B cell (primary cell): ENCODE measurements at regions of chr9 and their contacts with region 1.

Region 1: GRCh38 chr9:37283730-37284325 is 138.7 kb upstream of the GRHPR start:
- DNase-seq: peak; percentile 54
- ATAC-seq: peak; percentile 57
- H3K4me3 ChIP-seq: peak overlapping the region in 4 of 5 experiments; percentile 13 to 40 (median 31)
- H3K4me3 Mint-ChIP-seq: peak overlapping the region; percentile 75
- H3K27ac ChIP-seq: peak overlapping the region; percentile 54 to 78
- H3K27ac Mint-ChIP-seq: peak overlapping the region; percentile 90
- H3K4me1 ChIP-seq: peaks cover 40 to 61% of the 10 kb centered on the region in 2 donors
- H3K4me1 Mint-ChIP-seq: peaks cover 60% of the 10 kb centered on the region
- H3K27me3 ChIP-seq: no peaks in the 10 kb centered on the region
- H3K27me3 Mint-ChIP-seq: no peaks in the 10 kb centered on the region
- CTCF ChIP-seq: no peak

Region 2: DNA sequence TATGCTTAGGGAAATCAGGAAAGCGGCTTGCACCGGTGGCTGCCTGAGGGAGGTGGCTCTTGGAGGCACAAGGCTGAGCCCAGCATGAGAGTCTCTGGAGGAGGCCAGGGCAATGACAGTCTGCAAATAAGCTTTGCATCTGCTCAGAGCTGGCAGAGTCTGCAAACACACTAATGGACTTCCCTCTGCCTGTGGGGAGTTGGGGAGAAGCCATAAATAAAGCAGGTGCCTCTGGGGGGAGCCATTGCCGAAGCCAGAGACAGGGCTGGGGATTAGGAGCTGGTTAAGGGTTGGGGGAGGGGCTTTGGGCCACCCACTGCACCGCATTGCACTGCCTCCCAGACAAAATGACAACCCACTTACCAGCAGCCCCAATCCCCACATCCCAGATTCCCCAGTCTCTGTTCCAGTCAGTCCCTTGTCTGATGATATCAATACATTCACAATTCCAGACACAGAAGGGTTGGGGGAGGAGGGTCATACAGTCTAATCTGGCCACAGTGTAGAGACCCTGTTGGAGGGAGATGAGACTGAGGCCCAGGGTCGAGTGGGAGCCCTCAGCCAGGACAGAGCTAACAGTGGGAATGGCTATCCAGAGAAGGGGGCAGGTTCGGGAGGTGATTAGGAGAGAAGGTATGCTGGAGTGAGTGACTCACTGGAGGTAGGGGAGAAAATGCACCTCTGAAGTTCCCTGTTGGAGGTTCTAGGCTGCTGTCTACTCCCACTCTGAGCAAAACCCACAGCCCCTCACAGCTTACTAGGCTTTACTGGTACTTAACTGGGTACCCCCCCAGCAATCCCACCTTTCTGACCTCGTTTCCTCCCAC is 303.5 kb before region 1 on chr9:
- CTCF ChIA-PET with region 1: no interaction called
- POLR2A ChIA-PET with region 1: interaction called, 10 read pairs
- intact Hi-C with region 1: no loop called
- DNase-seq: peak; percentile 53
- ATAC-seq: peak; percentile 47
- H3K4me3 ChIP-seq: no peak overlapping the region
- H3K4me3 Mint-ChIP-seq: peak overlapping the region; percentile 8
- H3K27ac ChIP-seq: peak overlapping the region in 1 of 2 donors; percentile 74
- H3K27ac Mint-ChIP-seq: peak overlapping the region; percentile 78
- H3K4me1 ChIP-seq: peaks cover 53 to 73% of the 10 kb centered on the region in 2 donors
- H3K4me1 Mint-ChIP-seq: peaks cover 78% of the 10 kb centered on the region
- H3K27me3 ChIP-seq: no peaks in the 10 kb centered on the region
- H3K27me3 Mint-ChIP-seq: no peaks in the 10 kb centered on the region
- CTCF ChIP-seq: no peak

Region 3: DNA sequence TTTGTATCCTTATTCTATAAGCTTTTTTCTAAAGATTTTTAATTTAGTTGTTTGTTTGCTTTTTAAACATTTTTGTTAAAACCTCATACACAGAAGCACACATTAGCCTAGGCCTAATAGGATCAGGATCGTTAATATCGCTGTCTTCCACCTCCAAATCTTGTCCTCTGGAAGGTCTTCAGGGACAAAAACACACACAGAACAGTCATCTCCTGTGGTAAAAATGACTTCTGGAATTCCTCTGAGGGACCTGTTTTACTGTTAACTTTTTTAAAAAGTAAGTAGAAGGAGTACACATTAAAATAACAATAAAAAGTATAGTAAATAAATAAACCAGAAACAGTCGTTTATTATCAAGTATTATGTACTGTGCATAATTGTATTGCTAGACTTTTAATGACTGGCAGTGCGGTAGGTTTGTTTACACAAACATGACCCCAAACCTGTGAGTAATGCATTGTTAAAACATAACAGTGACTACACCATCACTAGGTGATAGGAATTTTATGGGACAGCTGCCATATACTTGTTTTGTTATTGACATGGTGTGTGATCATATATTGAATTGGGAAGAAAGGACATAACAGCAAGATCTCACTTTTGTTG is 53.8 kb before region 1 on chr9:
- CTCF ChIA-PET with region 1: interaction called, 3 read pairs
- POLR2A ChIA-PET with region 1: no interaction called
- intact Hi-C with region 1: loop called (anchors 5 kb)
- DNase-seq: no peak
- ATAC-seq: no peak
- H3K4me3 ChIP-seq: no peak overlapping the region
- H3K4me3 Mint-ChIP-seq: no peak overlapping the region
- H3K27ac ChIP-seq: no peak overlapping the region
- H3K27ac Mint-ChIP-seq: peak overlapping the region; percentile 2
- H3K4me1 ChIP-seq: peaks cover 20 to 40% of the 10 kb centered on the region in 2 donors
- H3K4me1 Mint-ChIP-seq: peaks cover 49% of the 10 kb centered on the region
- H3K27me3 ChIP-seq: no peaks in the 10 kb centered on the region
- H3K27me3 Mint-ChIP-seq: no peaks in the 10 kb centered on the region
- CTCF ChIP-seq: no peak